Activated CD4-positive, alpha-beta memory T cell treated with anti-CD3 and anti-CD28 coated beads for 36 hours (primary cell): ENCODE measurements at regions of chr12 and their contacts with region 1.

Region 1: DNA sequence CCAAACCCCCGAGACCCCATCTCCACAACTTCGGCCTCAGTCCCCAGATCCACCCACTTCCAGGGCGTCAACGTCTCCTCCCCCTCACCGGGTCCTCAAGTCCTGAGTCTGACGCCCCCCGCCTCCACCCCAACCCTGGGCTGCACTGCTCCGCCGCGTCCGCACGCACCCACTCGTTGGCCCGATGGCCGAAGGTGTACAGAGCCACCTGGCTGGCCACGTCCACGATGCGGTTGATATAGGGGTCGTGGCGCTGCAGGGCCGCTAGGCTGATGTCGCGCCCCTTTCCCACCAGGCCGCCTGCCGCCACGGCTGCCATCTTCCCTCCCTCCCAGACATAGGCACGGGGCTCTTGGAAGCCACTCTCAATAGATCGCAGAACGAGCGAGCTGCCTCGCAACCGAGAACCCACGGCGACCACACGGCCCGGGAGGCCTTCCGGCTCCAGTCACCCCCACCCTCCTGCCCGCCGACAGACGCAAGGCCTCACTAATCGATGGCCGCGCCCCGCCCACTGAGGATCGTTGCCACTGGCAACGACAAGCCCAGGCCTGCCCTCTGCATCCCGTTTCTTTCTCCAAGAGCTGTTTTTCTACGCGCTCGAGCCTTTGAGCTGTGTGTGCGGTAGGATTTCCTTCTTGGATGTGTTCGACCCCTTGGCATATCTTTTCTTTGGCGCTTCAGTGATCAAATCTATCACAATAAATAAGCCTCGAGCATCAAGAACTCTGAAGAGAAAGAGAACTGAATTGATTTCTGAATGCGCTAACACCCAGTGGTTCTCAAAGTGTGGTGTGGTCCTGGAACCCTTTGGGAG is at the start of gene DCP1B:
- DNase-seq: peak; percentile 98
- H3K4me3 Mint-ChIP-seq: peak within 1 kb of the TSS; percentile 100
- H3K27ac Mint-ChIP-seq: peak within 1 kb of the TSS; percentile 97
- H3K4me1 Mint-ChIP-seq: peaks cover 31% of the 10 kb centered on the region
- H3K27me3 Mint-ChIP-seq: no peaks in the 10 kb centered on the region
- total RNA-seq, gene DCP1B: 13.1 to 13.4 TPM

Region 2: GRCh38 chr12:1993871-1994371 is 10.4 kb before region 1 on chr12:
- CTCF ChIA-PET with region 1: no interaction called
- POLR2A ChIA-PET with region 1: interaction called, 5 read pairs
- intact Hi-C with region 1: loop called (anchors 1 kb)
- DNase-seq: peak; percentile 37
- H3K4me3 Mint-ChIP-seq: no peak overlapping the region
- H3K27ac Mint-ChIP-seq: peak overlapping the region; percentile 65
- H3K4me1 Mint-ChIP-seq: peaks cover 40% of the 10 kb centered on the region
- H3K27me3 Mint-ChIP-seq: no peaks in the 10 kb centered on the region

Region 3: DNA sequence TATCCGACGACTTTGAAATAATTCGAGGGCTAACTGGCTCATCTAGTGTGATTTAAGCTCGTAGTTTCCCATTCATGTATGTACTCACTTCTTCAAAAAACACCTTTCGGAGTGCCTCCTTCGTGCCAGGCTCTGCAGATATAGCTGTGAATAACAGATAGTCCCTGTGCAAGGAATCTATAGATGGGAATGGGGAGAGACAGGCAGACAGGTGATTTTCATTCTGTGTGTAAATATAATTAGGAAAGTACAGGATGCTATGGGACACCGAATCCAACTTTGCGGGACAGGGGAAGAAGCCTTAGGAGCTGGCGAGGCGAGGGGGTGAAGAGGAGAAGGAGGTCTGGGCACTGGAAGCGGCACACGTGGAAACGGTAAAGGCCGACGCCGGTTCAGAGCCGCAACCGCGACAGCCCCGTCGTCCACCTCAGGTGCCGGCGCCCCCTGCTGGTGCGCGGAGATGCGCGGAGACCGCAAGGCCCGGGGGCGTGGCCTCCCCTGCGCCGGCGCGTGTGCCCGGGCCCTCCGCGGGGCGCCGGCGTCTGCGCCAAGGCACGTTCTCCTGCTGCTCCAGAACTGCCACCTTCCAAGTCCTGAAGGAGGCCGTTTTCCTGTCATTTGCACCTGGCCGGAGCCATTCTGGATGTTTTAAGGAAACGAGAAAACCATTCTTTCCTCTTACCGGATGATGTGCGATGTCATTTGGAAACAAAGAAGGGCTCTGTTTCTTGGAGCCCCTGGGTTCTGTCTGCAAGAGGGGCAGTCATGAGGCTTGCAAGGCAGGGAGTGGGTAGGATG is 30.5 kb after region 1 on chr12:
- CTCF ChIA-PET with region 1: interaction called, 4 read pairs
- POLR2A ChIA-PET with region 1: no interaction called
- intact Hi-C with region 1: loop called (anchors 1 kb)
- DNase-seq: peak; percentile 89
- H3K4me3 Mint-ChIP-seq: peak overlapping the region; percentile 62
- H3K27ac Mint-ChIP-seq: no peak overlapping the region
- H3K4me1 Mint-ChIP-seq: peaks cover 10% of the 10 kb centered on the region
- H3K27me3 Mint-ChIP-seq: peaks cover 26% of the 10 kb centered on the region